Ovary (tissue), 10 donors: ENCODE measurements at regions of chr10 and their contacts with region 1.

Region 1: GRCh38 chr10:31603235-31604087 is 284.4 kb downstream of the ZEB1 start:
- DNase-seq: peak; percentile 96 to 98 (median 97)
- H3K4me3 ChIP-seq: peak overlapping the region; percentile 53
- H3K27ac ChIP-seq: peak overlapping the region; percentile 26 to 79
- H3K4me1 ChIP-seq: peaks cover 6% of the 10 kb centered on the region
- H3K27me3 ChIP-seq: no peaks in the 10 kb centered on the region
- CTCF ChIP-seq: peak in 2 of 3 donors; percentile 45 to 54
- EP300 ChIP-seq: no peak
- POLR2A ChIP-seq: peak; percentile 54

Region 2: DNA sequence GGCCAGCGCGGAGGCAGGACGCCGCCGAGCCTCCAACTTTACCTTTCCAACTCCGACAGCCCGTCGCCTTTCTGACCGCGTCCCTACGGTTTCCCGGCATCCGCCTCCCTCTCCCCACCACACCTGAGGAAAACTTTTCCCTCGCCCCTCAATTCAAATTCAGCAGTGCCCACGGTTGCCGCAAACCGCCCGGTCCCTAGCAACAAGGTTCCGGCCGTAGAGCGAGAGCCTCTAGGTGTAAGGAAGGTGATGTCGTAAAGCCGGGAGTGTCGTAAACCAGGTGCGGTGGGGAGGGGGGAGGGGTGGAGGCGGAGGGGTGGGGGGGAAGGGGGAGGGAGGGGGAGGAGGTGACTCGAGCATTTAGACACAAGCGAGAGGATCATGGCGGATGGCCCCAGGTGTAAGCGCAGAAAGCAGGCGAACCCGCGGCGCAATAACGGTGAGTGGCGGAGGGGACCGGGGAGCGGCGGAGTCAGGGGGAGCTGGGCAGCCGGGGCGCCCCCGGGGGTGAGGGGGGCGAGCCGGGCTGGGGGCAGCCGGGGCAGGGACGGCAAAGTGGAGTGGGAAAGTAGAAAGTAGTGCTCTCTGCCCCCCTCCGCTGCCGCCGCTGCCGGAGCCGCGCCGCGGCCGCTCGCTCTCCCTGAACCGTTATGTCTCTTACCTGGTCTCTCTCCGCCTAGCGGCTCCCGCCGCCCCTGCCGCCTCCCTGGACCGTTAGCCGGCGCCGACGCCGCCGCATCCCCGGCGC is 284.4 kb before region 1 on chr10 and contains the start of gene ZEB1:
- intact Hi-C with region 1: loop called in 1 of 4 experiments (anchors 10 kb)
- DNase-seq: peak; percentile 87 to 95 (median 92)
- H3K4me3 ChIP-seq: peak within 1 kb of the TSS; percentile 95
- H3K27ac ChIP-seq: peak within 1 kb of the TSS; percentile 89 to 94
- H3K4me1 ChIP-seq: no peaks in the 10 kb centered on the region
- H3K27me3 ChIP-seq: no peaks in the 10 kb centered on the region
- CTCF ChIP-seq: peak; percentile 30 to 69 (median 58)
- EP300 ChIP-seq: no peak
- POLR2A ChIP-seq: peak; percentile 40
- total RNA-seq, gene ZEB1: 23.3 to 48.4 (median 40.7) TPM

Region 3: GRCh38 chr10:32041290-32042028 is 438.0 kb after region 1 on chr10:
- intact Hi-C with region 1: no loop called
- DNase-seq: no peak
- H3K4me3 ChIP-seq: no peak overlapping the region
- H3K27ac ChIP-seq: no peak overlapping the region
- H3K4me1 ChIP-seq: peaks cover 5% of the 10 kb centered on the region
- H3K27me3 ChIP-seq: no peaks in the 10 kb centered on the region
- CTCF ChIP-seq: no peak
- EP300 ChIP-seq: no peak
- POLR2A ChIP-seq: no peak